Mammary epithelial cell (primary cell): ENCODE measurements at regions of chr1 and their contacts with region 1.

Region 1: GRCh38 chr1:225777583-225778336 is at the start of gene SRP9:
- DNase-seq: peak; percentile 99
- H3K4me3 ChIP-seq: peak within 1 kb of the TSS; percentile 74 to 99 (median 77)
- H3K27ac ChIP-seq: peak within 1 kb of the TSS; percentile 92
- H3K4me1 ChIP-seq: peaks cover 25% of the 10 kb centered on the region
- H3K27me3 ChIP-seq: no peaks in the 10 kb centered on the region
- CTCF ChIP-seq: peak; percentile 78 to 94
- total RNA-seq, gene SRP9: 164 to 214 TPM

Region 2: GRCh38 chr1:225480825-225481434 is 296.8 kb before region 1 on chr1:
- CTCF ChIA-PET with region 1: interaction called, 9 read pairs
- dilution Hi-C with region 1: no loop called
- in situ Hi-C with region 1: loop called in 1 of 2 experiments (anchors 5 kb)
- intact Hi-C with region 1: loop called (anchors 1 kb)
- DNase-seq: peak; percentile 28
- H3K4me3 ChIP-seq: no peak overlapping the region
- H3K27ac ChIP-seq: no peak overlapping the region
- H3K4me1 ChIP-seq: no peaks in the 10 kb centered on the region
- H3K27me3 ChIP-seq: no peaks in the 10 kb centered on the region
- CTCF ChIP-seq: peak; percentile 93 to 95

Region 3: GRCh38 chr1:225746361-225747179 is 31.2 kb before region 1 on chr1:
- CTCF ChIA-PET with region 1: no interaction called
- dilution Hi-C with region 1: no loop called
- in situ Hi-C with region 1: no loop called
- intact Hi-C with region 1: no loop called
- DNase-seq: peak; percentile 82
- H3K4me3 ChIP-seq: peak overlapping the region in 2 of 3 experiments; percentile 35 to 39
- H3K27ac ChIP-seq: peak overlapping the region; percentile 36
- H3K4me1 ChIP-seq: peaks cover 8% of the 10 kb centered on the region
- H3K27me3 ChIP-seq: no peaks in the 10 kb centered on the region
- CTCF ChIP-seq: peak in 1 of 2 donors; percentile 11

Region 4: DNA sequence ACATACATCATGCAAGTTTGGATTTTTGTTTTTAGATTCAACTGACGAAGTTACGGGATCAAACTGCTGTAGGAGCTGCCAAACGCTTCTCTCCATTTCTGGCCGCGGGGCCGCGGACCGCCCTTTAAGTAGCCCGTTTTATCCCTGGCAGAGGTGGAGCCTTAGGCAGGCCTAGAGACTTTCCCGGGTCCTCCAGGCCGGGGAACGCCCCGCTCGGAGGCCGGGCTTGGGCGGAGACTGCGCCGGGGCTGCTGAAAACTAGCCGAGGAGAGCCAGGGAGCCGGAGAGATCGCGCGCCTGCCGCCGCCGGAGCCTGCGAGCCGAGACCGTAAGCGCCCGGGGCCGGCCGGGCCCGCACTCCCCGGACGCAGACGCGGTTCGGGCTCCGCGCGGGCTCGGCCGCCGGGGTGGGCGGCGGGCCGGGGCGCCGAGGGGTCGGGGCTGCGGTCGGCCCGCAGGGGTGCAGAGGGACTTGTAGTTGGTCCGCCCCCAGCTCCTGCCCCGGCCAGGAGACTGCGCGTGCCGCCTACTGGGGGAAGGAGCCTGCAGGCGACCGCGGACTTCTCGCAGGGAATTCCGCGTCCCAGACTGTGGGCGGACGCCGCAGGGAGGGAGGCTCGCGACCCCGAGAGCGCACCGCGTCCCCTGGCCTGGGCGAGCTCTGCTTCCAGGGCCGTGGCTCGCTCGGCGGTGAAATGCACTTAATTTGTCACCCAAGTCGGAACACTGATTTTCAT is 32.2 kb after region 1 on chr1 and contains the start of gene EPHX1:
- CTCF ChIA-PET with region 1: no interaction called
- dilution Hi-C with region 1: no loop called
- in situ Hi-C with region 1: no loop called
- intact Hi-C with region 1: loop called (anchors 2 kb)
- DNase-seq: peak; percentile 86
- H3K4me3 ChIP-seq: peak within 1 kb of the TSS; percentile 50 to 86 (median 85)
- H3K27ac ChIP-seq: peak within 1 kb of the TSS; percentile 24
- H3K4me1 ChIP-seq: peaks cover 5% of the 10 kb centered on the region
- H3K27me3 ChIP-seq: no peaks in the 10 kb centered on the region
- CTCF ChIP-seq: peak in 1 of 2 donors; percentile 47
- total RNA-seq, gene EPHX1: 22.8 to 32.8 TPM

Region 5: DNA sequence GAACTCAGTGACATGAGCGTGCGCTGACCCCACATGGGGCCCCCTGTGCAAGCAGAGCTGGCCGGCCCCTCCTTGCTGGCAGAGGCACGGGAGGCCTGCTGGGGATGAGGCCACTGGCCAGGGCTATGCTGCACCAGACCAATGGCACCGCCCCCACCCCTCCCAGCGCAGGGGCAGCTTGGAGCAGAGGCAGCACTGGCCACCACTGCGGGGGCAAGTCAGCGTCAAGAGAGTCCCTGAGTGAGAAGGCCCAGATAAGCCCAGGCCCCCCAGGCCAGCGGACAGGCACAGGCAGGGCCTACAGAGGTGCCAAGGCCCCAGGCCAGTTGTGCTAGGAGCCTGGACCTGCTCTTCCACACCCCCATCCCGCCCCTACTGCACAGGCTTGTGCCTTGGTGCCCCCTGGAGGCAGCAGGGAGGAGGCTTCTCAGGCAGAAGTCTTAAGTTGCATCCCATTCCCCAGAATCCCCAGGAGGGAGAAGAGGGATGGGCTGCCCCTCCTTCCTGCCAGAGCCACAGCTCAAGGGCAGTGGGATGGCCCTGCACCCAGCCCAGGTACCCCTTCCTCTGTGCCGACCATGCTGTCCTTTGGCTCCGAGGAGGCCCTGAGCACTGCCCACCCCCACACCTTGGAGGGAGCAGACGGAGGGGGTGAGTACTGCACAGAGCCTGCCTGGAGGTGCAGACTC is 68.0 kb after region 1 on chr1:
- CTCF ChIA-PET with region 1: no interaction called
- dilution Hi-C with region 1: loop called (anchors 5 kb)
- in situ Hi-C with region 1: no loop called
- intact Hi-C with region 1: loop called (anchors 1 kb)
- DNase-seq: peak; percentile 56
- H3K4me3 ChIP-seq: no peak overlapping the region
- H3K27ac ChIP-seq: no peak overlapping the region
- H3K4me1 ChIP-seq: peaks cover 7% of the 10 kb centered on the region
- H3K27me3 ChIP-seq: no peaks in the 10 kb centered on the region
- CTCF ChIP-seq: peak; percentile 67 to 89

Region 6: DNA sequence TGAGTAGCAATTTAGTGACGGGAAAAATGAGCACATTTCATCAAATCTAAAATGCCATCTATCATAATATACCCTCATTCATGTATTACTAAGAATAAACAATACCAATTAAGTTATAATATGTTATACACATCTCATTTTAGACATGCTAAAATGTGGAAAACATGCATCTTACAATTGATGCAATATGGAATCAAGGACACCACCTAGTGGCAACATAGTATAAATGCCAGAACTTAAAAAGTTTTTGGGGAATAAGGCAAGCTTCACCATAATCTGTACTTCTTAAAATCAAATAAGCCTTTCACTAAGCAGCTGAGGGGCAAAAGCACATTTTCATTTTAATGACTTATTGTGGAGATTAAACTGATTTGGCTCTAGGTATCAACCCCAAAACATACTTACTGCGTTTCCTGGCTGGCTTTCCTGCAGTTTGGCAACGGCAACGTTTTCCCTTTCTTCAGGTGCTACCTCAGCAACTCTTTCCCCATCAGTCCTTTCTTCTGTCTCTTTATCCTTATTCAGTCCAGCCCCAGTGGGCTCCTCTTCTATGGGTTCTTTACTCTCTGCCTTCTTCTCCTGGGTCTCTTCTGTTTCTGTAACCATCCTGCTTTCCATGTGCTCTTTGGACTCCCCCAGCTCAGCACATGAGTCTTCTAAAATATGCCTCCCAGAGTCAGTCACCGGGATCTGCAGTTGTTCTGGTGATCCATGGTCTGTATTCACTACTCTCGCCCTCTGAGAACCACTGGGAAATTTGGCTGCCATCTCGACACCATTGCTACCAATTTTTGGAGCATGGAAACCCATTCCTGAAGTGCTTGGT is 209.9 kb after region 1 on chr1:
- CTCF ChIA-PET with region 1: interaction called, 3 read pairs
- dilution Hi-C with region 1: no loop called
- in situ Hi-C with region 1: loop called in 1 of 2 experiments (anchors 10 kb)
- intact Hi-C with region 1: no loop called
- DNase-seq: peak; percentile 30
- H3K4me3 ChIP-seq: no peak overlapping the region
- H3K27ac ChIP-seq: no peak overlapping the region
- H3K4me1 ChIP-seq: no peaks in the 10 kb centered on the region
- H3K27me3 ChIP-seq: no peaks in the 10 kb centered on the region
- CTCF ChIP-seq: peak; percentile 69 to 78